OCI-LY7 (cell line): ENCODE measurements at regions of chr1 and their contacts with region 1.

Region 1: DNA sequence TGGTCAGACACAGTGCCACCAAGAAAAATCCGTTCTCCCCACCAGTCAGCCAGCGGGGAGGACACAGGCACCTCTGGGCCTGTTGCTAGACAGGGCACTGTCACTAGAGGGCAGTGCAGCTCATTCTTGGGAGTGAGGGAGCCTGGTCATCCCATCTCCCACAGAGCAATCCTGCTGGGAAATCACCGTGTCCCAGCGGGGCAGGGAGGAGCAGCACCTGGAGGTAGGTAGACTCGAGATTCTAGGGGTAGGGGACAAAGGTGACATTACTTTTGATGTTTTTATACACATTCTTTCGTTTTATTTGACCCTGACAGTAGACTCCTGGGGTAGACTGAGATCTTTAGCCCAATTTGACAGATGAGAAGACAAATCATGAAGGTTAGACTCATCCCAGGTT is 6.7 kb upstream of the CAMK1G start:
- DNase-seq: peak; percentile 44
- H3K4me3 ChIP-seq: no peak overlapping the region
- H3K27ac ChIP-seq: no peak overlapping the region
- H3K4me1 ChIP-seq: no peaks in the 10 kb centered on the region
- CTCF ChIP-seq: peak; percentile 83

Region 2: DNA sequence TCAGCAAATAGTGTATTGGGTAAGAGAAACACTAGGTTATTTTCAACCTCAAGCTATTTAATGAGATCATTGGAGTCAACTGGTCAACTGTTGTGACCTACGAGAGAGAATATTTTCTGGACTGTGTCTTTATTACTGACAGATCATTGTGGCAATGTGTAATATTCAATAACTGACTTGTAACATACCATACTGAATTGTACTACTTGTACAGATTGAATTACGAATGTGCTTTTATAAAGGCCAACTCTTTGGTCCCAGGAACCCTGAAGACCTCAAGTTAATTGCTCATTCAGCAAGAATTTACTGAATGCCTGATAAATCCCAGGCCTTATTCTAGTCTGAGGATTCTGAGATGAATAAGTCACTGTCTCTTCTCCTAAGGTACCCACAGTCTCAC is 49.4 kb before region 1 on chr1:
- CTCF ChIA-PET with region 1: no interaction called
- POLR2A ChIA-PET with region 1: no interaction called
- intact Hi-C with region 1: no loop called
- DNase-seq: no peak
- H3K4me3 ChIP-seq: no peak overlapping the region
- H3K27ac ChIP-seq: no peak overlapping the region
- H3K4me1 ChIP-seq: no peaks in the 10 kb centered on the region
- CTCF ChIP-seq: no peak

Region 3: DNA sequence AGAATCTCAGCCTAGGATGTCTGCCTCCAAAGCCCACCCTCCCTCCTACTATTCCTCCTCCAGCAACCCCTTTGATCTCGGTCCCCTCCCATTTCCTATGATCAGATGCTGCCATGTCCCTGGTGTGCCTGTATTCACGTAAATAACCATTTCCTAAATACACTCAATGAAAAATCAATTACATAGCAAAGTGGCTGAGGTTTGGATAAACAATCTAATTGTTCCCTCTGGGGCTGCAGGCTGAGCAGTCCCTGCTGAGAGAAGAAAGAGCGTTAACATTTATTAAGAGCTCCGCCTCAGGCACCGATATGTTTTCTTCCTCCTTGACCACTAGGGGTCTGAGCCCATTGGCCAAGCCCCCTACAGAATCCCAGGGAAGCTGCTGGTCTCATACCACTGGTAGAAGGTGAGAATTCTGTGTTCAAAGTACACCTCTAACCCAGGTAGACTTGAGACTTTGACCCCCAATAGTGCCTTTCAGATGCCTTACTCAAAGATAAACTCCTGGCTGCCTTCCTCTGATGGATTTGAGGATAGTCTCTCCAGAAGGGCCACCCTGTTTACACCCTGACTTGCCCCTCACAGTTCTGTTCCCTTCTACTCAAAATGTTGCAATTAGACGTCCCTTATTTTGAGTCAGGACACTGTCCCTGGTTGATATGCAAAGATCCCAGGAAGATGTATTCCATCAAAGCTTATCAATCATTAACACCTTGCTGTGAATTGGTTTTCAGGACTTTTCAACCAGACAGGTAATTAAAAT is 27.2 kb before region 1 on chr1:
- CTCF ChIA-PET with region 1: no interaction called
- POLR2A ChIA-PET with region 1: no interaction called
- intact Hi-C with region 1: no loop called
- DNase-seq: no peak
- H3K4me3 ChIP-seq: no peak overlapping the region
- H3K27ac ChIP-seq: no peak overlapping the region
- H3K4me1 ChIP-seq: no peaks in the 10 kb centered on the region
- CTCF ChIP-seq: peak; percentile 53

Region 4: DNA sequence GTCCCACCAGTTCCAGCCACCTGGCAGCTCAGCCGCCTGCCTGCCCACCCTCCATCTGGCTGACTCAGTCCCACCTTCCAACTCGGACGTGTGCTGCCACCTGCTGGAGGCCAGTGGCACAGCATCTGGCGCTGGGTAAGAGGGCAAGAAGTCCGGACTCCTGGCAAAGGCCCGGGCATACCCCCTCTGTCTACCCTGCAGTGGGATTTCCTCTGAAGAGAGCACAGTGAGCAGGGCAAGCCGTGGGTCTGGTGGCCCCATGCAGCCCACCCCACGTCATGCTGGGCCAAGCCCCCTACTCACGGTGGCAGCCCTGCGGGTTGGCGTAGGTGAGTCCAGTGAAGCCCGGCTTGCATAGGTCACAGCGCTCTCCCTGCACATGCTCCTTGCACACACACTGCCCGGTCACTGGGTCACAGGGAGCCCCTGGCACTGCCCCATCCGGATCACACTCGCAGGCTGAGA is 51.0 kb after region 1 on chr1:
- CTCF ChIA-PET with region 1: interaction called, 3 read pairs
- POLR2A ChIA-PET with region 1: no interaction called
- intact Hi-C with region 1: loop called (anchors 5 kb)
- DNase-seq: peak; percentile 53
- H3K4me3 ChIP-seq: no peak overlapping the region
- H3K27ac ChIP-seq: no peak overlapping the region
- H3K4me1 ChIP-seq: no peaks in the 10 kb centered on the region
- CTCF ChIP-seq: peak; percentile 84

Region 5: GRCh38 chr1:209692745-209693504 is 116.1 kb after region 1 on chr1:
- CTCF ChIA-PET with region 1: no interaction called
- POLR2A ChIA-PET with region 1: no interaction called
- intact Hi-C with region 1: loop called (anchors 2 kb)
- DNase-seq: peak; percentile 63
- H3K4me3 ChIP-seq: no peak overlapping the region
- H3K27ac ChIP-seq: no peak overlapping the region
- H3K4me1 ChIP-seq: no peaks in the 10 kb centered on the region
- CTCF ChIP-seq: peak; percentile 96

Region 6: DNA sequence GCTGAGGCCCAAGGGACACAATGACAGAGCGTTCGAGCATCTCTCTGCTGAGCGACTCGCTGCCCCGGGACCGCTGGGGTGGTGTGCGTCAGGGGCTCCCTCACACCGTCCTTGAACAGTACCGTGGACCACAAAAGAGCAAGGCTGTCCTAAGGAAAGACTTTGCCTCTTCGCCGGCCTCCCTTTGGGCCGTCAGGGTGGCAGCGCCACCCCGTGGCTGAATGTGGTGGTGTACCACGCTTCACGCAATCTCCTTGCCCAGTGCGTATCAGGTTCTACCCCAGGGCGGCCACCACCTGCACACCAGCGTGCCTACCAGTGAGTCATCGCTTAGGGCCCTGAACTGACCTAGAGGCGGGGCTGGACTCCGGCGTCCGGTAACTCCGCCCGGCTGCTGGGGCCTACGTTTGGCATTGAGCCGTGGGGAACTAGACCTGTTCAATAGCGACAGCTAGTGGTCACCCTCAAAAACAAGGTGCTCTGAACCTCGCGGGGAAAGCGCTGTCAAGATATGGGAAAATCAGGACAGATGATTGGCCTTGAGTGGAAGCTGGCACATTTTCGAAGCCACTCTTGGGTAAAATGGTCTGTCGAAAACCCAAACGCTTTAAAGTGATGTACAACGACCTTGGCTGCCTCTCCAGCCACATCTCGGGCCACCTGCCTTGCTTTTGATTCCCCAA is 170.9 kb after region 1 on chr1:
- CTCF ChIA-PET with region 1: no interaction called
- POLR2A ChIA-PET with region 1: no interaction called
- intact Hi-C with region 1: loop called (anchors 5 kb)
- DNase-seq: peak; percentile 53
- H3K4me3 ChIP-seq: peak overlapping the region; percentile 25
- H3K27ac ChIP-seq: no peak overlapping the region
- H3K4me1 ChIP-seq: peaks cover 13% of the 10 kb centered on the region
- CTCF ChIP-seq: peak; percentile 93